Gastrocnemius medialis (tissue), 4 donors: ENCODE measurements at regions of chr18 and their contacts with region 1.

Region 1: DNA sequence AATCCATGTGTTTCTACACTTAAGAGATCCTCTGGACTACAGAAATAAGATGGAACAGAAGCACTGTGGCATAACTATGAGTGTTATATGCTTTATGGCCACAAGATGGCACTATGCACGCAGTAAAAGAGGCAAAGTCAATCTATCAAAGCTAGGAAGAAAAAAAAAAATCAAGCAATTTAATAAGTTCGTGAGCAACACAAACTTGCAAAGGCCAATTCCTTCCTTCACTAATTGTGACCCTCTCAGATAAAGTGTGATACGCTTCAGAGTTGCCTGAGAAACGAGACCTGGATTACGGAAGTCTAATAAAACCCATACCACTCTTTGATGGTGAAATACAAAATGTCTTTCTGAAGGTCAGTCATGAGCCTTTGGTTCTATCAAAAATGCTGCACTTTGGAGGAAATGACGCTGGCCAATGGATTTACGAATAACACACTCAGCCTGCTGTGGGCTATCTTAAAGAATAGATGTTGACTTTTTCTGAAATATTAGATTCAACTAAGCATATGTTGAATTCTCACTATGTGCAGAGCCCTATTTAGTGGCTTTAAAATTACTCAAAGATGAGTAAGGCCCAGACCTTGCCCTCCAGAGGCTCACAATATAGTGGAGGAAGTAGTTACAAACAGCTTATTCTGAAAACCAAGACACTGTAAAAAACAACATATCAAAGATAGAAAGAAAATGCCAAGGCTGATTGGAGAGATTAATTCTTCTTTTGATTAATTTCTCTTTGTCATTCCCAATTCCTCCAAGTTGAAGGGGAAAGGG is 35.5 kb upstream of the TTR start:
- DNase-seq: no peak
- ATAC-seq: peak; percentile 55 to 63
- H3K4me3 ChIP-seq: no peak overlapping the region
- H3K27ac ChIP-seq: no peak overlapping the region
- H3K4me1 ChIP-seq: no peaks in the 10 kb centered on the region
- H3K27me3 ChIP-seq: no peaks in the 10 kb centered on the region
- CTCF ChIP-seq: peak; percentile 54 to 79 (median 75)
- POLR2A ChIP-seq: no peak

Region 2: DNA sequence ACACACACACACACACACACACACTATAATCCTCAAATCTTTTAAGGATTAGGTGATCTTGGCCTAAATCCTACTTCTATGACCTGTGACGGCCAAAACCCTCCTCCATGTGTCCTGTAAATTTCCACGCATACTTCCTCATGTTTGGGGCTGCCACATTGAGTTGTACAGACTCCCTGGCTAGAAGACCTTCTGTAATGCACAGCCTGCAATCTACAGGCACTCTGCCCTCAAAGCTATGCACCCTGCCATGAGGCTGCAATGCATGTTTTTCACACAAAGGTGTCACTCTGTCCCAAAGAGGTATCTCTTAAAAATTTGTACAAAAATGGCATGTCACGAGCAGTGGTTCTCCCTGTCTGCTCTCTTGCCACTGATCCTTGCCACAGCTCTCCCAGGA is 154.7 kb after region 1 on chr18:
- in situ Hi-C with region 1: loop called in 2 of 4 experiments (anchors 5 to 10 kb)
- intact Hi-C with region 1: no loop called
- DNase-seq: no peak
- ATAC-seq: no peak
- H3K4me3 ChIP-seq: no peak overlapping the region
- H3K27ac ChIP-seq: no peak overlapping the region
- H3K4me1 ChIP-seq: no peaks in the 10 kb centered on the region
- H3K27me3 ChIP-seq: no peaks in the 10 kb centered on the region
- CTCF ChIP-seq: no peak
- POLR2A ChIP-seq: no peak

Region 3: GRCh38 chr18:31722369-31722957 is 166.3 kb after region 1 on chr18:
- in situ Hi-C with region 1: loop called in 2 of 4 experiments (anchors 5 to 10 kb)
- intact Hi-C with region 1: loop called (anchors 1 kb)
- DNase-seq: peak; percentile 49 to 62
- ATAC-seq: peak; percentile 83 to 87
- H3K4me3 ChIP-seq: no peak overlapping the region
- H3K27ac ChIP-seq: no peak overlapping the region
- H3K4me1 ChIP-seq: peaks cover 5 to 16% of the 10 kb centered on the region in 2 donors
- H3K27me3 ChIP-seq: no peaks in the 10 kb centered on the region
- CTCF ChIP-seq: peak; percentile 48 to 84 (median 66)
- POLR2A ChIP-seq: no peak

Region 4: DNA sequence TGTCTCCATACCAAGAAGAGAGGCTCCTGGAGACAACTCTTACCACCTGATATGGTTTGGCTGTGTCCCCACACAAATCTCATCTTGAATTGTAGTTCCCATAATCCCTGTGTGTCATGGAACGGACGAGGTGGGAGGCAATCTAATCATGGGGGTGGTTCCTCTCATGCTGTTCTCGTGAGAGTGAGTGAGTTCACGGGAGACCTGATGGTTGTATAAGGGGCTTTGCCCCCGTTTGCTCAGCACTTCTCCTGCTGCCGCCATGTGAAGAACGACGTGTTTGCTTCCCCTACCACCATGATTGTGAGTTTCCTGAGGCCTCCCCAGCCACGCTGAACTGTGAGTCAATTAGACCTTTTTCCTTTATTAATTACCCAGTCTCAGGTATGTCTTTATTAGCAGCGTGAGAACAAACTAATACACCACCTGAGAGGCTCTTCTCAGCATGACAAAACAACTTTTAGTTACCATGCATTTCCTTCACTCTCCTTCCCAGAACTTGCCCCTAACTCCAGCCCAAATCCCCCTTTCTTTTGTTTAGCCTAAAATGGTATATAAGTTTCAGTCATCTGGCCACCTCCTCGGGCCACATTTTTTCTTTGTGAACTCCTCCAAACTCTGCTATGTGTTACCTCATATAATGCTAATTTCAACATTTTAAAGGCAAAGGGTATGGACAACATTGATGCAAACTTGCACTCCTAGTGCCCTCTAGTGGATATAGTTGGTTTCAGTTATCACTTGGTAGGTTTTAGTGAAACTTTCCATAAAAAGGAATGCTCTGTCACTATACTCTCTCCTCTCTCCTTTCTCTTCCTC is 263.2 kb after region 1 on chr18:
- in situ Hi-C with region 1: loop called in 3 of 4 experiments (anchors 10 to 25 kb)
- intact Hi-C with region 1: loop called (anchors 2 kb)
- DNase-seq: no peak
- ATAC-seq: peak in 1 of 2 donors; percentile 58
- H3K4me3 ChIP-seq: no peak overlapping the region
- H3K27ac ChIP-seq: no peak overlapping the region
- H3K4me1 ChIP-seq: no peaks in the 10 kb centered on the region
- H3K27me3 ChIP-seq: no peaks in the 10 kb centered on the region
- CTCF ChIP-seq: peak in 4 of 5 experiments; percentile 24 to 62 (median 53)
- POLR2A ChIP-seq: no peak

Region 5: DNA sequence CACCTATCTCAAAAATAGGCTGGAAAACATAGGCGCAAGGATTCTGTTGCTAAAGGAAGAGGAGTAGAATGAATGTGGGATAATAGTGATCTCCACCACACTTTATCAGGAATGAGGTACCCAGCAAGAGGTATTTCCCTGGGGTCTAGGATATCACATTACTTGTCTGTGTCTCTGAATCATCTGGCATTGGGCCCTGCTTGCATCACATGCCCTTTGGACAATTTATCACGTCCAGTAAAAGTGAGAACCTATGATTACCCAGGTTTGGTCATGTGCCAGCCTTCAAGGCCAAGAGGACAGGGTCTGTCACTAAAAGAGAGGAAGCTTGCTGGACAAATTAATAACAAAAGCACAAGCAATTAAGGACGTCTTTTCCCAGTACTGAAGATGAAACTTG is 398.2 kb after region 1 on chr18:
- in situ Hi-C with region 1: loop called in 2 of 4 experiments (anchors 25 kb)
- intact Hi-C with region 1: no loop called
- DNase-seq: no peak
- ATAC-seq: no peak
- H3K4me3 ChIP-seq: no peak overlapping the region
- H3K27ac ChIP-seq: no peak overlapping the region
- H3K4me1 ChIP-seq: no peaks in the 10 kb centered on the region
- H3K27me3 ChIP-seq: no peaks in the 10 kb centered on the region
- CTCF ChIP-seq: no peak
- POLR2A ChIP-seq: no peak

Region 6: GRCh38 chr18:31977270-31977872 is 421.2 kb after region 1 on chr18:
- in situ Hi-C with region 1: loop called (anchors 5 to 25 kb)
- intact Hi-C with region 1: loop called (anchors 5 kb)
- DNase-seq: peak in 1 of 2 donors; percentile 10
- ATAC-seq: peak; percentile 66 to 85
- H3K4me3 ChIP-seq: no peak overlapping the region
- H3K27ac ChIP-seq: no peak overlapping the region
- H3K4me1 ChIP-seq: no peaks in the 10 kb centered on the region
- H3K27me3 ChIP-seq: no peaks in the 10 kb centered on the region
- CTCF ChIP-seq: peak; percentile 54 to 82 (median 73)
- POLR2A ChIP-seq: no peak